Activated naive CD4-positive, alpha-beta T cell treated with anti-CD3 and anti-CD28 coated beads for 36 hours (primary cell): ENCODE measurements at regions of chr12 and their contacts with region 1.

Region 1: DNA sequence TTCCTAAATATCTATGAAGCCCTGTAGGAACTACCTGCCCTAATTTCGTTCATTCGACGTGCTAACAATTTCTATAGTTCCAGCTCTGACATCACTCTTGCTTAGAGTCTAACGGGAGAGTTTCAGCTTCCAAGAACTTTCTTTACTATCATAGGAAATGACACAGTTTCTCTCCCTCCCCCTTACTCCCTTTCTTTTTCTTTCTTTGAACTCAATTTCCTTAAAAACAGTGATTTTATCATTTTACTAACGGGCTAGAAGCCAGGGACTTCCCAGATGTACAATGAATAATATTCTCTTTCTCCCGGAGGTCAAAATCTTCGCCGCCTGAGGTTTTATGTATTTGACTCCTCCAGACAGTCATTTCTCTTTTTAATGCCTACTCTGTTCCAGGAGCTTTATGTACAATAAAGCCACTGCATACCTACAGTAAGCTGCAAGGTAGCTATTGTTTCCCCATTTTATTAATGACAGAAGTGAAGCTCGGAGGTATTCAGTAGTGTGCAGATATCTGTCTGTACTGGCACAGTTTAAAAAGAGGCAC is 15.7 kb downstream of the SMCO2 start:
- DNase-seq: peak; percentile 59
- H3K4me3 Mint-ChIP-seq: no peak overlapping the region
- H3K27ac Mint-ChIP-seq: peak overlapping the region; percentile 72
- H3K4me1 Mint-ChIP-seq: peaks cover 58% of the 10 kb centered on the region
- H3K27me3 Mint-ChIP-seq: no peaks in the 10 kb centered on the region

Region 2: DNA sequence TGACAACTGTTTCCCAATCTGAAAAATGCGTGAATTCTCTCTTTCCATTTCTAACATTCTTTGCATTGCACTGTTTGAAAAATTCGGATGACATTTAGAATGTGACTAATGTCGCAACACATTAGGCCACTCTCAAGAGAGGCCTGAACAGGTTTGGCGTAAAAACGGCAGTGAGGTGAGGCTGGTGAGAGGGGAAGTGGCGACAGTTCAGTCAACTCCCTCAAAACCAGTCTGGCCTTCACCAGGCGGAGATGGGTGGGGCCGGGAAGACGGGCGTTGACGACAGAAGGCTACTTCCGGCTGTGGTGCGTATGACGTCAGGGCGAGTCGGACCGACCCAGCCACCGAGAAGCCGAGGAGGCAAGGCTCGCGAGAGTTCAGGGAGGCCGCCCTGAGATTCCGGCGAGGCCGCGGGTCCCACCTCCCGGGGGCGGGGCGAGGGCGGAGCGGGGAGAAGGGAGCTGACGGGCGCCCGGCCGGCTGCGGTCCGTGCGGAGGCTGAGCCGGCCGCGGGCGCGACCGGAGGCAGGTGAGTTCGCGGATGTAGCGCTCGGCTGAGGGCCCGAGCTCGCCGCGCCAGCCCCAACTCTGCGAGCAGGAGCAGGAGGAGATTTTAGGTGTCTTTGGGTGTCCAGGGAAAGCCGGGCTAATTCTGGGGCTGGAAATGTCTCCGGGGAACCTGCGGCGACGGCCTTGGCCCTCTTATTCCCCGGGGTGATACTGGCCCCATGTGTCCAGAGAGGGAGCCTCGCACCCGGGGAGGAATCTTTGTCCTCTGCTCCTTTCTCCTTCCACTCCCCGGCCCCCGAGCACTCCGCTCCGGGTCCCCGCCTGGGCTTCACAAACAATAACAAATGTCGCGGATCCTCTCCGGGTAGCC is 218.2 kb before region 1 on chr12 and contains the start of gene STK38L:
- CTCF ChIA-PET with region 1: no interaction called
- intact Hi-C with region 1: loop called (anchors 1 kb)
- DNase-seq: peak; percentile 98
- H3K4me3 Mint-ChIP-seq: peak within 1 kb of the TSS; percentile 98
- H3K27ac Mint-ChIP-seq: peak within 1 kb of the TSS; percentile 91
- H3K4me1 Mint-ChIP-seq: peaks cover 47% of the 10 kb centered on the region
- H3K27me3 Mint-ChIP-seq: no peaks in the 10 kb centered on the region
- total RNA-seq, gene STK38L: 21.3 to 21.4 TPM

Region 3: GRCh38 chr12:27486961-27487360 is 24.7 kb after region 1 on chr12:
- CTCF ChIA-PET with region 1: no interaction called
- intact Hi-C with region 1: no loop called
- DNase-seq: no peak
- H3K4me3 Mint-ChIP-seq: no peak overlapping the region
- H3K27ac Mint-ChIP-seq: no peak overlapping the region
- H3K4me1 Mint-ChIP-seq: no peaks in the 10 kb centered on the region
- H3K27me3 Mint-ChIP-seq: peaks cover 9% of the 10 kb centered on the region

Region 4: GRCh38 chr12:27498149-27498548 is 35.9 kb after region 1 on chr12:
- CTCF ChIA-PET with region 1: no interaction called
- intact Hi-C with region 1: loop called (anchors 1 kb)
- DNase-seq: no peak
- H3K4me3 Mint-ChIP-seq: no peak overlapping the region
- H3K27ac Mint-ChIP-seq: peak overlapping the region; percentile 11
- H3K4me1 Mint-ChIP-seq: peaks cover 27% of the 10 kb centered on the region
- H3K27me3 Mint-ChIP-seq: peaks cover 18% of the 10 kb centered on the region

Region 5: GRCh38 chr12:27619308-27619707 is 157.1 kb after region 1 on chr12:
- CTCF ChIA-PET with region 1: no interaction called
- intact Hi-C with region 1: loop called (anchors 2 kb)
- DNase-seq: peak; percentile 20
- H3K4me3 Mint-ChIP-seq: no peak overlapping the region
- H3K27ac Mint-ChIP-seq: no peak overlapping the region
- H3K4me1 Mint-ChIP-seq: peaks cover 18% of the 10 kb centered on the region
- H3K27me3 Mint-ChIP-seq: no peaks in the 10 kb centered on the region

Region 6: DNA sequence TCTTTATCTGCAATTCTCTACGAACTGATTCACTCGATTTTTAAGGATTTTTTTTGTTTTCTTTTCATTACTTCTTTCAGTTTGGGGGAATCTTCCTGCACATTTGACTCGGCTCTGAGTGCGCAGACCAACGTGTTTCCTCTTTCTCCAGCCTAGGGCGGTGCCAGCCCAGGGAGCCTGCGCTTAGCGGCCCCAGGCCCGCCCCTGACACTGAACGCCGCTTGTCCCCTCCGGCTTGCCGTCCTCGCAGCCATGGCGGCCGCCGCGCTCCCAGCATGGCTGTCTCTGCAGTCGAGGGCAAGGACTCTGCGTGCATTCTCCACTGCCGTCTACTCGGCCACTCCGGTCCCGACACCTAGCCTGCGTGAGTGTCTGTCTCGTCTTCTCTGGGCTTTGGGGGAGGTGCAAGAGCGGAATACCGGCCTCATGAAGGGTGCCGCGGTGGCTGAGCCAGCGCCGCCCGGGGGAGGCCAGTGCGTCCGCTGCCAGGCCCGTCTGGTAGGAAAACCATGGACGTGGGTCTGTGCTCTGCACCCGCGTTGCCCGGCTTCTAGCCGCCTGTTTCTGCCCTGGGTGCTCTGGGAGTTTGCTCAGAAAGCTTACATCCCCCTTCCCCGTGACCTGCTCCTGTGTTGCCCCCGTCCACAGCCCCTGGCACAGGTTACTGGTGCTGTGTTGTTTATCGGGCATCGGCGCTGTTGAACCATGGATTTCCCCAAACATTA is 248.5 kb after region 1 on chr12 and contains the start of gene MRPS35:
- CTCF ChIA-PET with region 1: no interaction called
- intact Hi-C with region 1: loop called (anchors 1 kb)
- DNase-seq: peak; percentile 95
- H3K4me3 Mint-ChIP-seq: peak within 1 kb of the TSS; percentile 98
- H3K27ac Mint-ChIP-seq: peak within 1 kb of the TSS; percentile 92
- H3K4me1 Mint-ChIP-seq: peaks cover 18% of the 10 kb centered on the region
- H3K27me3 Mint-ChIP-seq: no peaks in the 10 kb centered on the region
- total RNA-seq, gene MRPS35: 53.1 to 57.6 TPM

Region 7: DNA sequence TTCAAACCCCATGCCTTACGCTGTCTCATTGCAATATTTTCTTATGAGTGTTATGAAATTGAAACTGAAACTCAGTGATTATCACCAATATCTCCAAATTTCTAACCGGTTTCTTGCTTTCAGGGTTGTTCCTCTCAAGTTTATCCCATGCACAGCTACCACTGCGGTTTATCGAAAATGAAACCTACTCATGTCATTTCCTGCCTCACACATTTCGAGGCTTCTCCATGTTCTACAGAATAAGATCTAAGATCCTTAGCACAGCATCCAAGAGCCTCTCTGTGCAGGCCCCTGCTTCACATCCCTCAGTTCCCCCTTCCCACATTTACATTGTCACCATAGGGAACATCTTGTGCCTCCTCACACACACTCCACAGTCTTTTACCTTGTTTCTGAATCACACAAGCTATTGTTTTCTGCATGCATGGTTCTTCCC is 1641.3 kb after region 1 on chr12:
- CTCF ChIA-PET with region 1: no interaction called
- intact Hi-C with region 1: loop called (anchors 5 kb)
- DNase-seq: peak; percentile 64
- H3K4me3 Mint-ChIP-seq: no peak overlapping the region
- H3K27ac Mint-ChIP-seq: no peak overlapping the region
- H3K4me1 Mint-ChIP-seq: peaks cover 31% of the 10 kb centered on the region
- H3K27me3 Mint-ChIP-seq: no peaks in the 10 kb centered on the region